Heart right ventricle (tissue), 16 donors: ENCODE measurements at regions of chr1 and their contacts with region 1.

Region 1: GRCh38 chr1:168178638-168179437 is at the start of gene TIPRL:
- DNase-seq: peak; percentile 95 to 96
- ATAC-seq: peak; percentile 94 to 99 (median 98)
- H3K4me3 ChIP-seq: peak within 1 kb of the TSS; percentile 70 to 98 (median 74)
- H3K27ac ChIP-seq: peak within 1 kb of the TSS; percentile 67 to 98 (median 94)
- H3K4me1 ChIP-seq: peaks cover 0 to 16% (median 14%) of the 10 kb centered on the region in 9 donors
- H3K27me3 ChIP-seq: peaks cover 0 to 4% (median 0%) of the 10 kb centered on the region in 7 donors
- CTCF ChIP-seq: peak; percentile 39 to 89 (median 73)
- total RNA-seq, gene TIPRL: 25.0 to 37.5 (median 31.3) TPM

Region 2: DNA sequence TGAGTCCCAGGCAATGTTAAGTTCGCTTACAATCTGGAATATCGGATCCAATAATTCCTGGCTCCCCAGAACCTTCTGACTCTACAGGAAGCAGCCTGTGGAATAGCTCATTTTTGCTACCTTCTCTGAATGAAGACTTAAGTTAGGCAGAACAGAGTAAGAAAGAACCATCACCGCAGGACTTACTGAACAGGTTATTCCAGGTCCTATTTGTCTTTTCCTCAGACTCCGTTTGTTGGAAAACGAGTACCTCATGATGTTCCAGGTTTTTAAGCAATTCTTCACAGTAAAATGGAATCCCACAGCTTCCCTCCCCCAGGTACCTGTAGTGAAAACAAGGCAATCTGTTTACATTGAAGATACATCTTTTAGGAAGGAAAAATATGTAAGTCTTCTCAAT is 324.7 kb before region 1 on chr1:
- intact Hi-C with region 1: no loop called
- DNase-seq: no peak
- ATAC-seq: no peak
- H3K4me3 ChIP-seq: no peak overlapping the region
- H3K27ac ChIP-seq: no peak overlapping the region
- H3K4me1 ChIP-seq: peaks cover 0 to 5% (median 0%) of the 10 kb centered on the region in 9 donors
- H3K27me3 ChIP-seq: no peaks in the 10 kb centered on the region
- CTCF ChIP-seq: no peak

Region 3: GRCh38 chr1:168225476-168226190 is 46.8 kb after region 1 on chr1 and contains the start of gene SFT2D2:
- intact Hi-C with region 1: loop called in 2 of 10 experiments (anchors 2 to 5 kb)
- DNase-seq: peak; percentile 73 to 82
- ATAC-seq: peak; percentile 95 to 98 (median 96)
- H3K4me3 ChIP-seq: peak within 1 kb of the TSS; percentile 68 to 99 (median 98)
- H3K27ac ChIP-seq: peak within 1 kb of the TSS; percentile 51 to 97 (median 88)
- H3K4me1 ChIP-seq: peaks cover 0 to 51% (median 36%) of the 10 kb centered on the region in 9 donors
- H3K27me3 ChIP-seq: peaks cover 0 to 6% (median 0%) of the 10 kb centered on the region in 7 donors
- CTCF ChIP-seq: no peak
- total RNA-seq, gene SFT2D2: 10.7 to 34.8 (median 16.9) TPM

Region 4: GRCh38 chr1:168301664-168302334 is 123.0 kb after region 1 on chr1:
- intact Hi-C with region 1: no loop called
- DNase-seq: no peak
- ATAC-seq: no peak
- H3K4me3 ChIP-seq: no peak overlapping the region
- H3K27ac ChIP-seq: no peak overlapping the region
- H3K4me1 ChIP-seq: no peaks in the 10 kb centered on the region
- H3K27me3 ChIP-seq: no peaks in the 10 kb centered on the region
- CTCF ChIP-seq: no peak